Upper lobe of right lung (tissue), 1 donor: ENCODE measurements at regions of chr1 and their contacts with region 1.

Region 1: DNA sequence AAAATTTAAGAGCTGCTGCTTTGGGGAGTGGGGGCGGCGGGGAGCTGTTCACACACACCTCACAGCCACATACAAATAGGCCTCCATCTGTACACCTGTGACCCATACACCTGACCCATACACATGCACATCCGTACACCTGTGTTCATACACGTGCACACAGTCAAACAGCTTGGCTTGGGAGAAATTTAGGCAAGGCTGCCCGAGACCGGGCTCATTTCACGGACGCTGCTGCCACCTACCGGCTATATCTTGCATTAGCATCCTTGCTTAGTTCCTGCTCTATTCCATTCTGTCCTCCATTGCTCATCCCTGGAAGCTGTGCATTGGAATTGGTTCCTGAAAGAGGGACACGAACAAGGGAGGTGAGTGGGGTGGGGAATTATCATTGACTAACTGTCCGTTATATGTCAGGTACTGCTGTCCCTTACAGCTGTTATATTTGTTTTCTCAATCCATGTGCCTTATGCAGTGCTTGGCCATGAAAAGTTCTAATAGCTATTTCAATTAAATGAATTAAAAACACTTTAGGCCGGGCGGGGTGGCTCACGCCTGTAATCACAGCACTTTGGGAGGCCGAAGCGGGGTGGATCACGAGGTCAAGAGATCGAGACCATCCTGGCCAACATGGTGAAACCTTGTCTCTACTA is 37.1 kb upstream of the EPB41 start:
- DNase-seq: peak; percentile 85
- ATAC-seq: peak; percentile 92
- H3K4me3 ChIP-seq: no peak overlapping the region
- H3K27ac ChIP-seq: no peak overlapping the region
- H3K4me1 ChIP-seq: no peaks in the 10 kb centered on the region
- H3K27me3 ChIP-seq: no peaks in the 10 kb centered on the region
- CTCF ChIP-seq: peak; percentile 94

Region 2: GRCh38 chr1:28789412-28789811 is 87.8 kb before region 1 on chr1:
- intact Hi-C with region 1: loop called (anchors 5 kb)
- DNase-seq: no peak
- ATAC-seq: no peak
- H3K4me3 ChIP-seq: no peak overlapping the region
- H3K27ac ChIP-seq: no peak overlapping the region
- H3K4me1 ChIP-seq: no peaks in the 10 kb centered on the region
- H3K27me3 ChIP-seq: no peaks in the 10 kb centered on the region
- CTCF ChIP-seq: no peak

Region 3: DNA sequence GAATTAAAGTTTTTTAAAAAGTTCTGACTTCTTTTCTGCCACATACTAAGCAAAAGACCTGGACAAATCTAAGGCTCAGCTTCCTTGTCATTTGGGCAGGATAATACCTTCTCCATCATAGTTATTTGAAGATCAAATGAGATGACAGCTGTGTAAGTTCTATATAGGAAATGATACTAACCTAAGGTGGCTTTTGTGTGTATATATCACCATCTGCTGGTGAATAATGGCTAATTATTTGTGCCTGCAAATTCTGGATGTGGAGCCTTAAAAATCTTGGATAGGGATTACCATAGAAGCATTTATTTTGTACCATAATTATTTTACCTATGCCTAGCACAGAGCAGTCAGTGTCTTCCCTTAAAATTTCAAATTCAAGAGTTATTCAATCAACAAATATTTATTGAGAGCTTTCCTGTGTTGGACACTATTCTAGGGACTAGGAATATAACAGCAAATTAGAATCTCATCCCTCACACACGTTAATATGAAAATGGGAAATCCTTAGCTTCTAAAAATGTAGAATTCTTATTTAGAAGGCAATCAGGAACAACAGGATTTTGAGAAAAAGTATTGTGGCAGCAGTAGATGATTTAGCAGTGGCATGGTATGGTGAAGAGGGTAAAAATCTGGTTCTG is 156.7 kb after region 1 on chr1:
- intact Hi-C with region 1: loop called (anchors 5 kb)
- DNase-seq: no peak
- ATAC-seq: peak; percentile 73
- H3K4me3 ChIP-seq: no peak overlapping the region
- H3K27ac ChIP-seq: no peak overlapping the region
- H3K4me1 ChIP-seq: no peaks in the 10 kb centered on the region
- H3K27me3 ChIP-seq: no peaks in the 10 kb centered on the region
- CTCF ChIP-seq: peak; percentile 64